ENCODE measurements at regions of chr12 and their contacts with region 1.

Region 1: DNA sequence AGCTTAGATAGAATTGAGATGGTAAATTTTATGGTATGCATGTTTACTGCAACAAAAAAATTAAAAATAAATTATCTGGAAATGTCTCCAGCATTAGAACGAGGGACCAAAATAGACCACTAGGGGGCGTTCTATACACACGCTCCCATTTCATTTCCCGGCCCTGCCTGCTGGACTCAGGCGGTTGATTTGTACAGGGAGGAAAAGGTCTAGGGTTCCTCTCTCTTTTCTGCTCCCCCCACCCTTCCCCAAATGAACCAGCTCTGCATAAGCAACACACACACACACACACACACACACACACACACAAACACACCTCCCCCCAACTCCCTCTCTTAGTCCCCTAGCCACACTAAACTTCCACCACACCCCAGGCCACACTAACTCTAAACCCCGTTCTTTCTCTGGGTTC is 7.8 kb upstream of the DTX1 start:
- DNase-seq: no peak
- ATAC-seq: peak; percentile 43
- H3K4me3 Mint-ChIP-seq: no peak overlapping the region
- H3K27ac Mint-ChIP-seq: peak overlapping the region; percentile 75
- H3K4me1 Mint-ChIP-seq: peaks cover 50% of the 10 kb centered on the region
- H3K27me3 Mint-ChIP-seq: no peaks in the 10 kb centered on the region
- CTCF ChIP-seq: no peak

Region 2: DNA sequence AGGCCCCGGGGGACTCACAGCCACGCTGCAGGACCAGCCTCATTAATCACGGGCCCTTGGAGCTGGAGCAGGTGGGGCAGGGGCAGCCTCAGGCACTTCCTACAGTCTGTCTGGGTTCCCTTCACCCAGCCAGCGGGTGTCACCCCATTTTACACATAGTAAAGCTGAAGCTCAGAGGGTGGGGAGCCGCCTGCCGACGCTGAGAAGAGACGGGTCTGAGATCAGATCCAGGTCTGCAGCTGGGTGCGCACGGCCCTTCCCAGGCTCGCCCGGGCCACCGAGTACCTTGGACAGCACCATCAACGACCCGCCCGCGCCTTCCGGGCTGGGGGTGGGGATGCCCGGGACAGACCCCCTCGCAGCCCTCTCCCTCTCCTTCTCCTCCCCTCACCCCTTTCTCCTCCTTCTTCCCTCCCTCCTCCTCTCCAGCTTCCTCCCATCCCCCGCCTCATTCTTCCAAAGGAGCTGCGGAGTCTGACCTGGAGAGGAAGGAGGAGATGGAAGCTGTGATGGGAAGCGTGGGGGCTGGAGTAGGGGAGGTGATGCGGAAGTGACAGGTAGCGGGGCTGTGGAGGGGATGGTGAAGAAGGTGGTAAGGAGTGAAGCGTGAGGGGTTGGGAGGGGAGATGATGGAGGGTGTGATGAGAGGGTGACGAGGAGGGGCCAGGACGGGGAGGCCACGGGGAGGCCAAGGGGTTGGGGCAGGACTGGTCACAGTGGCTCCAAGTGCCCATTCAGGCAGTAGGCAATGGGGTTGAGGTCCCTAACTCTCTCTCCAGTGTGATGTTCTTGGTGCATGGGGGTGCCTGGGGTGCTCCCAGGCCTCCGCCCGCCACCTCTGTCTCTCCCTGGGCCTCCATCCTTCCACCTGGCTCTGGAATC is 16.6 kb after region 1 on chr12:
- CTCF ChIA-PET with region 1: interaction called, 31 read pairs
- POLR2A ChIA-PET with region 1: interaction called, 160 read pairs
- intact Hi-C with region 1: loop called (anchors 1 kb)
- DNase-seq: no peak
- ATAC-seq: peak; percentile 19
- H3K4me3 Mint-ChIP-seq: peak overlapping the region; percentile 57
- H3K27ac Mint-ChIP-seq: no peak overlapping the region
- H3K4me1 Mint-ChIP-seq: peaks cover 62% of the 10 kb centered on the region
- H3K27me3 Mint-ChIP-seq: no peaks in the 10 kb centered on the region
- CTCF ChIP-seq: no peak

Region 3: GRCh38 chr12:113086249-113087164 is 37.8 kb after region 1 on chr12:
- CTCF ChIA-PET with region 1: interaction called, 47 read pairs
- POLR2A ChIA-PET with region 1: interaction called, 21 read pairs
- intact Hi-C with region 1: no loop called
- DNase-seq: no peak
- ATAC-seq: peak; percentile 10
- H3K4me3 Mint-ChIP-seq: peak overlapping the region; percentile 71
- H3K27ac Mint-ChIP-seq: peak overlapping the region; percentile 81
- H3K4me1 Mint-ChIP-seq: peaks cover 96% of the 10 kb centered on the region
- H3K27me3 Mint-ChIP-seq: no peaks in the 10 kb centered on the region
- CTCF ChIP-seq: no peak

Region 4: GRCh38 chr12:113092607-113093408 is 44.1 kb after region 1 on chr12:
- CTCF ChIA-PET with region 1: interaction called, 85 read pairs
- POLR2A ChIA-PET with region 1: interaction called, 21 read pairs
- intact Hi-C with region 1: loop called (anchors 1 kb)
- DNase-seq: no peak
- ATAC-seq: peak; percentile 65
- H3K4me3 Mint-ChIP-seq: peak overlapping the region; percentile 80
- H3K27ac Mint-ChIP-seq: peak overlapping the region; percentile 82
- H3K4me1 Mint-ChIP-seq: peaks cover 55% of the 10 kb centered on the region
- H3K27me3 Mint-ChIP-seq: no peaks in the 10 kb centered on the region
- CTCF ChIP-seq: no peak

Region 5: GRCh38 chr12:113152835-113153814 is 104.4 kb after region 1 on chr12:
- CTCF ChIA-PET with region 1: interaction called, 46 read pairs
- POLR2A ChIA-PET with region 1: interaction called, 9 read pairs
- intact Hi-C with region 1: loop called (anchors 1 kb)
- DNase-seq: peak; percentile 45
- ATAC-seq: peak; percentile 66
- H3K4me3 Mint-ChIP-seq: peak overlapping the region; percentile 80
- H3K27ac Mint-ChIP-seq: no peak overlapping the region
- H3K4me1 Mint-ChIP-seq: peaks cover 24% of the 10 kb centered on the region
- H3K27me3 Mint-ChIP-seq: peaks cover 8% of the 10 kb centered on the region
- CTCF ChIP-seq: no peak

Region 6: DNA sequence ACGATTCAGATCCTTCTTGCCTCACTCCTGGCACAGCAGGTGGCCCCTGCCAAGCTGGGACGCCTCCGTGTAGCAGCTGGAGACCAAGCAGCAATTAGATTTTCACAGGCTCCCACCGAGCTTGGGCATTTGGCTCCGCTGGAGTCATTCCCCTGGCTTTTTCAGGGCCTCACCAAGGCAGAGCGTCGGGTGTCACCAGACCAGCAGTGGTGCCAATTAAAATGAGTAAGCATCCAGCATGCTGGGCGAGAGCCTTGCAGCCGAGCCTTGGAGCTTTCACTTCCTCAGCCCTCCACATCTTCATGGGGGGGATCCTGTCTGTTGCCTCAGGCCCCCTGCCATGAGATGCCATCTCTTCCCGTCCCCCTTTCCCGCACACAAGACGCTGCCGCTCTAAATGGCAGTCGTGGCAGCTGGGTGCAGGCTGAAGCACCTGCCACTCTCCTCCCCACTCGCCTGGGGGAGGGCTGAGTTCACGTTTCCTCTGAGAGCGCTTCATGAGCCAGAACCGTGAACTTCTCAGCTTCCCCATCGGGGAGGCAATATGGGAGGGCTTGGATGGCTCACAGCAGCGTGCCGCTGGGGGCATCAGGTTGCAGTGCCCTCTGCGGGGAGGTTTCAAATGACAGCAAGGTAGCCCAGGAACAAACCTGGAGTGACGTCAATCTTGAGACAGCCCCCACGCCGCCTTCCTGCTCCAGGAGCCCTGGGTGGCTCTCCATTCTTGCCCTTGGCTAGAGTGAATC is 184.3 kb after region 1 on chr12:
- CTCF ChIA-PET with region 1: no interaction called
- POLR2A ChIA-PET with region 1: interaction called, 6 read pairs
- intact Hi-C with region 1: loop called (anchors 5 kb)
- DNase-seq: peak; percentile 73
- ATAC-seq: peak; percentile 78
- H3K4me3 Mint-ChIP-seq: peak overlapping the region; percentile 76
- H3K27ac Mint-ChIP-seq: peak overlapping the region; percentile 95
- H3K4me1 Mint-ChIP-seq: peaks cover 87% of the 10 kb centered on the region
- H3K27me3 Mint-ChIP-seq: no peaks in the 10 kb centered on the region
- CTCF ChIP-seq: no peak